HepG2 (cell line): ENCODE measurements at regions of chr15 and their contacts with region 1.

Region 1: GRCh38 chr15:51192521-51193280 is 98.0 kb upstream of the TNFAIP8L3 start:
- DNase-seq: peak; percentile 64
- ATAC-seq: peak; percentile 91
- H3K4me3 ChIP-seq: no peak overlapping the region
- H3K27ac ChIP-seq: no peak overlapping the region
- H3K4me1 ChIP-seq: peaks cover 26% of the 10 kb centered on the region
- H3K27me3 ChIP-seq: no peaks in the 10 kb centered on the region
- CTCF ChIP-seq: peak; percentile 82
- EP300 ChIP-seq: no peak
- POLR2A ChIP-seq: no peak
- RAD21 ChIP-seq: peak; percentile 66; the same call in 1 of the 2 replicates

Region 2: GRCh38 chr15:50210291-50211062 is 982.2 kb before region 1 on chr15:
- CTCF ChIA-PET with region 1: no interaction called
- POLR2A ChIA-PET with region 1: no interaction called
- in situ Hi-C with region 1: no loop called
- intact Hi-C with region 1: no loop called
- DNase-seq: peak; percentile 42
- ATAC-seq: peak; percentile 29; the same call in 2 of the 3 replicates
- H3K4me3 ChIP-seq: no peak overlapping the region
- H3K27ac ChIP-seq: peak overlapping the region; percentile 44
- H3K4me1 ChIP-seq: peaks cover 25% of the 10 kb centered on the region
- H3K27me3 ChIP-seq: no peaks in the 10 kb centered on the region
- CTCF ChIP-seq: 0 out of 2 replicates have a peak, but pooled peaks have one; percentile 4
- EP300 ChIP-seq: no peak; a peak in 1 of 4 replicates
- POLR2A ChIP-seq: no peak
- RAD21 ChIP-seq: no peak

Region 3: GRCh38 chr15:51162865-51163762 is 29.6 kb before region 1 on chr15:
- CTCF ChIA-PET with region 1: interaction called, 17 read pairs
- POLR2A ChIA-PET with region 1: no interaction called
- in situ Hi-C with region 1: no loop called
- intact Hi-C with region 1: loop called (anchors 1 kb)
- DNase-seq: peak; percentile 45
- ATAC-seq: peak; percentile 96
- H3K4me3 ChIP-seq: no peak overlapping the region
- H3K27ac ChIP-seq: no peak overlapping the region
- H3K4me1 ChIP-seq: no peaks in the 10 kb centered on the region
- H3K27me3 ChIP-seq: no peaks in the 10 kb centered on the region
- CTCF ChIP-seq: peak; percentile 84
- EP300 ChIP-seq: no peak
- POLR2A ChIP-seq: no peak
- RAD21 ChIP-seq: peak; percentile 69; the same call in 1 of the 2 replicates